ENCODE measurements at regions of chr6 and their contacts with region 1.

Region 1: GRCh38 chr6:67300430-67301040 is 1334.5 kb upstream of the ADGRB3 start:
- DNase-seq: no peak
- H3K4me3 ChIP-seq: no peak overlapping the region
- H3K27ac ChIP-seq: no peak overlapping the region
- H3K4me1 ChIP-seq: no peaks in the 10 kb centered on the region
- H3K27me3 ChIP-seq: no peaks in the 10 kb centered on the region
- CTCF ChIP-seq: no peak

Region 2: GRCh38 chr6:68233623-68234022 is 933.1 kb after region 1 on chr6:
- intact Hi-C with region 1: loop called (anchors 5 kb)
- DNase-seq: no peak
- H3K4me3 ChIP-seq: no peak overlapping the region
- H3K27ac ChIP-seq: no peak overlapping the region
- H3K4me1 ChIP-seq: no peaks in the 10 kb centered on the region
- H3K27me3 ChIP-seq: no peaks in the 10 kb centered on the region
- CTCF ChIP-seq: no peak

Measured in kidney (tissue), 22 donors.